Activated B cell treated with CpG ODN at 0.5 μM for 24 hours (primary cell): ENCODE measurements at regions of chr7 and their contacts with region 1.

Region 1: GRCh38 chr7:144148224-144148827 is 25.4 kb downstream of the OR2A14 start:
- DNase-seq: no peak
- ATAC-seq: no peak
- H3K4me3 Mint-ChIP-seq: no peak overlapping the region
- H3K27ac Mint-ChIP-seq: no peak overlapping the region
- H3K4me1 Mint-ChIP-seq: no peaks in the 10 kb centered on the region
- H3K27me3 Mint-ChIP-seq: peaks cover 10% of the 10 kb centered on the region
- CTCF ChIP-seq: no peak

Region 2: DNA sequence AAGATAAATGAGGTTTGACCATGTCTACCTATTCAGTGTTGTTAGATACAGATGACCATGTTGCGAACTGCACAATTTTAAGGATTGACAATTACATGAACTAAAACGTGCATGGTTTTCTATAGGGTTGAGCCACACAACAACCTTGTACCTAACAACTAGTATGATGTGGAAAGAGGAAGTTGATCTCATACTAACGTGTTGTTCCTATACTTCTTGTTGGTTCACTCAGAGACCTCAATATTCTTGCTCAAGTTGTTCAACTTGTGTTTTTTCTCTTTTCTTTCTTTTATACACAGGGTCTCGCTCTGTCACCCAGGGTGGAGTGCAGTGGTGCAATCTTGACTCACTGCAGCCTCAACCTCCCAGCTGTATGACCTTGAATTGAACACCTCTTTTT is 1180.1 kb before region 1 on chr7:
- CTCF ChIA-PET with region 1: no interaction called
- POLR2A ChIA-PET with region 1: no interaction called
- intact Hi-C with region 1: no loop called
- DNase-seq: no peak
- ATAC-seq: no peak
- H3K4me3 Mint-ChIP-seq: no peak overlapping the region
- H3K27ac Mint-ChIP-seq: no peak overlapping the region
- H3K4me1 Mint-ChIP-seq: no peaks in the 10 kb centered on the region
- H3K27me3 Mint-ChIP-seq: peaks cover 24% of the 10 kb centered on the region
- CTCF ChIP-seq: no peak

Region 3: GRCh38 chr7:144134110-144134509 is 14.2 kb before region 1 on chr7:
- CTCF ChIA-PET with region 1: no interaction called
- POLR2A ChIA-PET with region 1: no interaction called
- intact Hi-C with region 1: no loop called
- DNase-seq: no peak
- ATAC-seq: no peak
- H3K4me3 Mint-ChIP-seq: no peak overlapping the region
- H3K27ac Mint-ChIP-seq: no peak overlapping the region
- H3K4me1 Mint-ChIP-seq: no peaks in the 10 kb centered on the region
- H3K27me3 Mint-ChIP-seq: no peaks in the 10 kb centered on the region
- CTCF ChIP-seq: no peak

Region 4: DNA sequence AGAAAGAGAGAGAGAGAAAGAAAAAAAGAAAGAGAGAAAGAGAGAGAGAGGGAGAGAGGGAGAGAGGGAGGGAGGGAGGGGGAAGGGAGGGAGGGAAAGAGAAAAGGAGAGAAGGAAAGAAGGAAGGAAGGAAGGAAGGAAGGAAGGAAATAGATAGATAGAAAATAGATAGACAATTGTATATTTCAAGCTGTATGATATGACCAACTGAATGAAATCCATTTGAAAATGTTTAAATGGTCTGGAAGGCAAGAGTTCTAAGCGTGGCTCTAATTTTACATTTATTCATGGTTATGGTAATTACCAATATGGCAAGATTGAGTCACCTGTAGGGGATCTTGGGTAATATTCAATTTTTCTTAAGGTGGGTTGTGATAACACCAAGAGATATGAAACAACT is 10.5 kb after region 1 on chr7:
- CTCF ChIA-PET with region 1: no interaction called
- POLR2A ChIA-PET with region 1: no interaction called
- intact Hi-C with region 1: loop called (anchors 1 kb)
- DNase-seq: no peak
- ATAC-seq: no peak
- H3K4me3 Mint-ChIP-seq: no peak overlapping the region
- H3K27ac Mint-ChIP-seq: no peak overlapping the region
- H3K4me1 Mint-ChIP-seq: no peaks in the 10 kb centered on the region
- H3K27me3 Mint-ChIP-seq: peaks cover 17% of the 10 kb centered on the region
- CTCF ChIP-seq: no peak